Left ventricle myocardium superior (tissue), 1 donor: ENCODE measurements at regions of chr4 and their contacts with region 1.

Region 1: GRCh38 chr4:185640811-185641675 is 105.7 kb upstream of the PDLIM3 start:
- DNase-seq: no peak
- ATAC-seq: no peak

Region 2: DNA sequence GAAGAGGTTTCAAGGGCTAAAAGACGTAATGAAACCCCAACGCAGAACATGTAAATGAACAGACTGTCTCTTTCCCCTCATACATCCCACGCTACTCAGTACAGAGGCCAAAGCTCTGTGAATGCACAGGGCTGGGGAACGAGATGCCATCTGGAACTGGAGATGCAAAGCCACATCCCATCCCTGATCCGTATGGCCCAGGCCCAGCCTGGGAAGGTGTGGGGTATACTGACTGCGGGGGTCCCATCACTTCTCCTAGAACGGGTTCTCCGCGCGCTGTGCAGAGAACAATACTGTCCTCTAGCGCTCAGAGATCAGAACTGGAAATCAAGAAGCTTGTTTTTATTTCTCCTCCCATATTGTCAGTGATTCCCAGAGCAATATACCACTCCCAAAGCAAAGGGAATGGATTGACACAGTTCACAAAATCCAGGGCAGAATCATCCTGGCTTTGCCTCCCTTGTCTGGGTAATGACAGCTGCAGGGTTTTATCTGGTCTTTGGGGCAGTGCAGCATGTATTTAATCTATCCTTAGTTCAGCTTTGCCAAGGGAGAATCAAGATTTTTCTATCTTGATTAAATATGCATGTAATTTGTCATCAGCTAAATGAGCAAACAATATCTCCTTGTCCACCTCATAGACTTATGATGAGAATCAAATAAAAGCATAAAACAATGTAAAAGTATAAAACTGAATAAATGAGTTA is 380.6 kb after region 1 on chr4:
- intact Hi-C with region 1: loop called (anchors 5 kb)
- DNase-seq: peak; percentile 40
- ATAC-seq: peak; percentile 76

Region 3: DNA sequence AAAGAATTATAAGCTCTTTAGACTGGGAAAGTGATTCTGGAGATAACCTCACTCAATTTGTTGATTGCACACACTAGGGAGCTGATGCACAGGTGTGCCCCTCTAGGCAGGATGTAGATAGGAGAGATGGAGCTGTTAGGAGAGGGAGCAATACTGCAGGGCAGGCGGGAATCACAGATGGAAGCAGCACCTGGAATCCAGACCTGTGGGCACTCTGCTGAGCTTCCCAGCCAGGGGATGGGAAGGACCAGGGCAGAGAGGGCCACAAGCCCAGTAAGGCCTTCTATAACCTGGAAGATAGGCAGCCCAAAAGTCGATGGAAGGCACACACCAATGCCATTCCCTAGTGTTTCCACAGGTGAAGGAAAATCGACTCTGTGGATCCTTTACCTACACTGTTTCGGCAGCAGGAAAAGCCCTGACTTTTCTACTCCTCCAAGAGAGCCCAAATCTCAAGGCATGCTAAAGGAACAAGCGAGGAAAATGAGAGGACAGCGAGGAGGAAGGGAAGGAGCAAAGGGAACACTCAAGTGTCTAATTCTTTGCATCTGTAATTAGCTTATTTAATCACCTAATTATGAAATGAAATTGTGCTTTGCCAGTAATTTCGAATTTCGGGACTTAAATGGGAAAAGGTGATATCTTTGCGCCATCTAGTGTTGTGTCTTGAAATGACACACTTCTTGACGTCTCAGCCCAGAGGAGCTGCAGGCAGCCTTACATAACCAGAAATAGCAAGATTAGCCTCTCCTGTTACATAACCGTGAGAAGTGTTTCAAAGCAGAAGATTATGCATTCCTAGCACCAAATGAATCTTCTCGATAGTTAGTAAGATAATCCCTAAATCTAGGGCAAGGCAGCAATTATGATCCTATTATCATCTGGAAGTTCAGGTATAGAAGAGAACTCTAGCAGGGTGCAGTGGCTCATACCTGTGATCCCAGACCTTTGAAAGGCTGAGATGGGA is 396.9 kb after region 1 on chr4:
- intact Hi-C with region 1: loop called (anchors 5 kb)
- DNase-seq: no peak
- ATAC-seq: peak; percentile 86